ENCODE measurements at regions of chr15 and their contacts with region 1.

Region 1: DNA sequence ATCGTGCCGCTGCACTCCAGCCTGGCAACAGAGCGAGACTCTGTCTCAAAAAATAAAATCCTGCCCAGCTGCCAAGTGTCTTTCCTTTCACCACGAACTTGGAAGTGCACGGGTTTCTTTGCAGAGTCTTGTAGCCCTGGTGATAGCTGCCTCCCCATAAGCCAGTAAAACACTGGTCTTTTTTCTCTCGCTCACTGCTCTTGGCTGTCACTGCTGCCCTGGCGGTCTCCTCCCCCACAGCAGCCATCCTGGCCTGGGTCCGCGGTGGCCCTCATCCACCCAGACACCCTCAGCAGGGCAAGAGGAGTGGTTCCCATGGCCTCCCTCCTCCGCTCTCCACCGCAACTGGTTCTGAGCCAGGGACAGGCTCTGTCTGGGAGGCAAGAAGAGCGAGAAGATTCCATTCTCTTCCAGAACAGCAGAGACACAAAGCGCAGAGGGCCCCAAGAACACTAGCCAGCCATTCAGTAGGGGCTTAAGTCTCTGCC is 44.4 kb downstream of the KLHL25 start:
- DNase-seq: peak in 1 of 14 experiments; percentile 32
- ATAC-seq: peak; percentile 21
- H3K4me3 ChIP-seq: no peak overlapping the region
- H3K4me3 Mint-ChIP-seq: no peak overlapping the region
- H3K27ac ChIP-seq: no peak overlapping the region
- H3K27ac Mint-ChIP-seq: peak overlapping the region; percentile 42
- H3K4me1 ChIP-seq: peaks cover 24% of the 10 kb centered on the region
- H3K4me1 Mint-ChIP-seq: peaks cover 44% of the 10 kb centered on the region
- H3K27me3 ChIP-seq: no peaks in the 10 kb centered on the region
- H3K27me3 Mint-ChIP-seq: no peaks in the 10 kb centered on the region
- CTCF ChIP-seq: no peak

Region 2: DNA sequence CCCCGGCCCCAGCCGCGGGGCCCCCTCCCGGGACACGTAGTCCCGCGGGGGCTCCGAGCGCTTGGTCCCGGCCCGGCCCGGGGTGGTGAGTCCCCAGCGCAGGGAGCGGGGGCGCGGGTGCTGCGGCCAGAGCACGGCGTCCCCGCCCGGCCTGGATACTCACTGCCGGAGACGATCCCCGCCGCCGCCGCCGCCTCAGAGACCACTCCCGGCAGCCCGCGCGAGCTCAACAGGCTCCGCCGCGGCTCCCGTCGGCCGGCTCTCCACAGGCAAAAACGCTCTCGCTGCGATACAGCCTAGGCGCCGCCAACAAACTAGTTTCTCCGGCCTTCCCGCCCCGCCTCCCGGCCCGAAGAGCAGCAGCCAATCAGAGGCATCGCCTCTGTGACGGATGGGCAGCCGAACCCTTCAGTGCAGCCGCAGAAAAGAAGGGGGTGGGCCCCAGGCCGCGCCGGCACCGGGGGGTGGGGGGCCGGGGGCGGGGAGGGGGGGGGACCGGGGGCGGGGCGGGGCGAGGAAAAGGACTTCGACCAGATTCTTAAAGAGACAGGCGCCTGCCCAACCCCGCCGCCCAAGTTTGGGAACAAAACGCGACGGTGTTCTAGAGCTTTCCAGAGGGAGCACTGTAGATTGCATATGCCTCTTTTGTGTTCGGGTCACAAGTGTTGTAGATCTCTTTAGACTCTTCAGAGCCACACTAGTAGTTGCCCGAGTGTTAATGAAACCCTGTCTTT is 44.4 kb after region 1 on chr15 and contains the start of gene KLHL25:
- CTCF ChIA-PET with region 1: interaction called, 3 read pairs
- POLR2A ChIA-PET with region 1: interaction called, 3 read pairs
- intact Hi-C with region 1: loop called in 1 of 2 experiments (anchors 5 kb)
- DNase-seq: peak; percentile 84 to 97 (median 92)
- ATAC-seq: peak; percentile 95
- H3K4me3 ChIP-seq: peak within 1 kb of the TSS; percentile 80
- H3K4me3 Mint-ChIP-seq: peak within 1 kb of the TSS; percentile 99
- H3K27ac ChIP-seq: peak within 1 kb of the TSS in 1 of 2 donors; percentile 56
- H3K27ac Mint-ChIP-seq: peak within 1 kb of the TSS; percentile 56
- H3K4me1 ChIP-seq: peaks cover 38% of the 10 kb centered on the region
- H3K4me1 Mint-ChIP-seq: peaks cover 47% of the 10 kb centered on the region
- H3K27me3 ChIP-seq: no peaks in the 10 kb centered on the region
- H3K27me3 Mint-ChIP-seq: no peaks in the 10 kb centered on the region
- CTCF ChIP-seq: no peak
- total RNA-seq, gene KLHL25: 9.0 to 10.2 TPM

Measured in CD4-positive, alpha-beta T cell (primary cell).